Activated B cell treated with CpG ODN at 0.5 μM for 24 hours (primary cell): ENCODE measurements at regions of chr13 and their contacts with region 1.

Region 1: GRCh38 chr13:27607125-27607524 is 13.2 kb downstream of the LNX2 start:
- DNase-seq: no peak
- ATAC-seq: no peak
- H3K4me3 Mint-ChIP-seq: no peak overlapping the region
- H3K27ac Mint-ChIP-seq: no peak overlapping the region
- H3K4me1 Mint-ChIP-seq: peaks cover 46% of the 10 kb centered on the region
- H3K27me3 Mint-ChIP-seq: no peaks in the 10 kb centered on the region
- CTCF ChIP-seq: no peak

Region 2: GRCh38 chr13:27556109-27556508 is 51.0 kb before region 1 on chr13:
- CTCF ChIA-PET with region 1: no interaction called
- POLR2A ChIA-PET with region 1: no interaction called
- intact Hi-C with region 1: loop called (anchors 5 kb)
- DNase-seq: no peak
- ATAC-seq: no peak
- H3K4me3 Mint-ChIP-seq: no peak overlapping the region
- H3K27ac Mint-ChIP-seq: no peak overlapping the region
- H3K4me1 Mint-ChIP-seq: no peaks in the 10 kb centered on the region
- H3K27me3 Mint-ChIP-seq: no peaks in the 10 kb centered on the region
- CTCF ChIP-seq: no peak

Region 3: GRCh38 chr13:27587095-27587746 is 19.9 kb before region 1 on chr13:
- CTCF ChIA-PET with region 1: no interaction called
- POLR2A ChIA-PET with region 1: no interaction called
- intact Hi-C with region 1: loop called (anchors 2 kb)
- DNase-seq: no peak
- ATAC-seq: no peak
- H3K4me3 Mint-ChIP-seq: no peak overlapping the region
- H3K27ac Mint-ChIP-seq: no peak overlapping the region
- H3K4me1 Mint-ChIP-seq: peaks cover 17% of the 10 kb centered on the region
- H3K27me3 Mint-ChIP-seq: no peaks in the 10 kb centered on the region
- CTCF ChIP-seq: no peak

Region 4: DNA sequence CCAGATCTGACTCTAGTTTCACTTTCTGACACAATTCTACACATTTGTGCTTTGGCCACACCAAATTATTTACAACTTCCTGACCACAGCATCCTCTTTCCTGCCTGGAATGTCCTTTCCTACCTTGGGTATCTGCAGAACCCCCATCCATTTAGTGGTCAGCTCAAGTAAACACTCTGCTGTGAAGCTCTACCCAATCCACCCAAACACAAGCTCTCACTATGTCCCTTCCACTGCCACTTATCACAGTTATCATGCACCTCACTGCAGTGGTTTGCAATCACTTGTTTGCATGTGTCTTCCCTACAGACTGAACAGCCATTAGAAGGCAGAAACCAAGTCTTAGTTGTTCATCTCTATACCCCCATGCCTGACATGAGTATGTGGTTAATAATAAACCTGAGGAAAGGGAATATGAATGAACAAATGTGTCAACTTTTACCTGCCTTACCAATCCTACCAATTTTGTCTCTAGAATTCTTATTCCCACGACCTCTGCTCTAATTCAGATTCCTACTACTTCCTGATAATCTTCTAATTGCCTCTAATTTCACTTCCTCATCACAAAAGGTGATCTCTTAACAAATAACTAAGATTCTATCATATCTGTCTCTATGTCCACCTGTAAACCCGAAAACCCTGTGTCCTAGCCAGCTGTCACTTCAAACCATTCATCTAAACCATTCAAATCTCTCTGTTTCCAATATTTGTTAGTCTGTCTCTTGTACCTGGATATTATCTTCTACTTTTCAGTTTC is 11.9 kb before region 1 on chr13:
- CTCF ChIA-PET with region 1: no interaction called
- POLR2A ChIA-PET with region 1: interaction called, 3 read pairs
- intact Hi-C with region 1: loop called (anchors 2 kb)
- DNase-seq: no peak
- ATAC-seq: peak; percentile 64
- H3K4me3 Mint-ChIP-seq: no peak overlapping the region
- H3K27ac Mint-ChIP-seq: no peak overlapping the region
- H3K4me1 Mint-ChIP-seq: no peaks in the 10 kb centered on the region
- H3K27me3 Mint-ChIP-seq: no peaks in the 10 kb centered on the region
- CTCF ChIP-seq: no peak